CD4-positive, alpha-beta memory T cell (primary cell): ENCODE measurements at regions of chr17 and their contacts with region 1.

Region 1: GRCh38 chr17:48678141-48678971 is 44.0 kb downstream of the PRAC1 start:
- DNase-seq: peak; percentile 56 to 68 (median 59)
- H3K4me3 ChIP-seq: no peak overlapping the region
- H3K4me3 Mint-ChIP-seq: peak overlapping the region in 4 of 8 donors; percentile 44 to 62 (median 52)
- H3K27ac ChIP-seq: no peak overlapping the region
- H3K27ac Mint-ChIP-seq: peak overlapping the region in 2 of 7 donors; percentile 47 to 68
- H3K4me1 ChIP-seq: peaks cover 8% of the 10 kb centered on the region
- H3K4me1 Mint-ChIP-seq: peaks cover 0 to 2% (median under 1%) of the 10 kb centered on the region in 4 donors
- H3K27me3 ChIP-seq: peaks cover 7% of the 10 kb centered on the region
- H3K27me3 Mint-ChIP-seq: peaks cover 28 to 40% of the 10 kb centered on the region in 2 donors

Region 2: GRCh38 chr17:48593840-48594537 is 84.4 kb before region 1 on chr17:
- CTCF ChIA-PET with region 1: no interaction called
- POLR2A ChIA-PET with region 1: no interaction called
- intact Hi-C with region 1: no loop called
- DNase-seq: peak; percentile 71 to 82 (median 77)
- H3K4me3 ChIP-seq: peak overlapping the region in 1 of 2 donors; percentile 30
- H3K4me3 Mint-ChIP-seq: peak overlapping the region; percentile 80 to 92 (median 82)
- H3K27ac ChIP-seq: no peak overlapping the region
- H3K27ac Mint-ChIP-seq: peak overlapping the region in 1 of 7 donors; percentile 74
- H3K4me1 ChIP-seq: peaks cover 46% of the 10 kb centered on the region
- H3K4me1 Mint-ChIP-seq: peaks cover 23 to 55% (median 43%) of the 10 kb centered on the region in 4 donors
- H3K27me3 ChIP-seq: peaks cover 47% of the 10 kb centered on the region
- H3K27me3 Mint-ChIP-seq: peaks cover 44 to 72% of the 10 kb centered on the region in 2 donors

Region 3: GRCh38 chr17:48630009-48630924 is 48.1 kb before region 1 on chr17:
- CTCF ChIA-PET with region 1: no interaction called
- POLR2A ChIA-PET with region 1: no interaction called
- intact Hi-C with region 1: no loop called
- DNase-seq: no peak
- H3K4me3 ChIP-seq: no peak overlapping the region
- H3K4me3 Mint-ChIP-seq: no peak overlapping the region
- H3K27ac ChIP-seq: no peak overlapping the region
- H3K27ac Mint-ChIP-seq: no peak overlapping the region
- H3K4me1 ChIP-seq: peaks cover 26% of the 10 kb centered on the region
- H3K4me1 Mint-ChIP-seq: peaks cover 8 to 36% (median 12%) of the 10 kb centered on the region in 4 donors
- H3K27me3 ChIP-seq: peaks cover 58% of the 10 kb centered on the region
- H3K27me3 Mint-ChIP-seq: peaks cover 63 to 72% of the 10 kb centered on the region in 2 donors

Region 4: GRCh38 chr17:48690655-48691054 is 12.3 kb after region 1 on chr17:
- CTCF ChIA-PET with region 1: interaction called, 37 read pairs
- POLR2A ChIA-PET with region 1: no interaction called
- intact Hi-C with region 1: no loop called
- DNase-seq: no peak
- H3K4me3 ChIP-seq: no peak overlapping the region
- H3K4me3 Mint-ChIP-seq: no peak overlapping the region
- H3K27ac ChIP-seq: no peak overlapping the region
- H3K27ac Mint-ChIP-seq: no peak overlapping the region
- H3K4me1 ChIP-seq: no peaks in the 10 kb centered on the region
- H3K4me1 Mint-ChIP-seq: no peaks in the 10 kb centered on the region
- H3K27me3 ChIP-seq: peaks cover 7% of the 10 kb centered on the region
- H3K27me3 Mint-ChIP-seq: peaks cover 17% of the 10 kb centered on the region in 2 donors

Region 5: DNA sequence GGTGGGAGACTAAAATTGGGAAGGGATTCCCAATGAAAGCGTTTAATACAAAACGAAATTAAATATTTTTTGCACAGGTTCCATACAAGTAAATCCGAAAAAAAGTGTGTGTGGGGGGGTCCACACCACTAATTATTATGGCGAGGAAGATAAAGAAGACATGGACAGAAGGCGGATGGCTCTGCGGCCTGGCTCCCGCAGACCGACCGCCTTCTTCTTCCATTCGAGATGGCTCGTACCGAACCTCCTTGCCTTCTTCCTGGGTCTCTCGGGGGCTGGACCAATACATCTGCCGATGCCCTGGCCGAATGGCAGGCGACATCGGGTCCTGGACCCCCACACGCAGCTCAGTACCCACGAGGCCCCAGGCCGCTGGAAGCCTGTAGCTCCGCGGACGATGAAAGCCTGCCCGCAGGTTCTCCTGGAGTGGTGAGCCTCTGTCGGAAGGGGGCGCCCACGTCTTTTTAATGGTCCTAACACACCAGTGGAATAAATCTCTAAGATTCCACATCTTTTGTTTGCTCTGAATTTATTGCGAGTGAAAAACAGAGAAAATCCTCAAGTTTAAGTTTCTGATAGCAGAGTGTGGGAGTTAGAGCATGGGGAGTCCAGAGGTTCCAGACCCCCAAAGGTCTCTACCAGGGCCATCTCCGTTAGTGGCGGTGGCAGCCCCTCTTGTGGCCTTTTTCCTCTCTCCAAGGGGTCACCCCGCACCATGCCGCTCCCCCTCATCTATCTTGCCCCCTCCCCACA is 46.1 kb after region 1 on chr17:
- CTCF ChIA-PET with region 1: interaction called, 15 read pairs
- POLR2A ChIA-PET with region 1: no interaction called
- intact Hi-C with region 1: no loop called
- DNase-seq: peak; percentile 64 to 79 (median 66)
- H3K4me3 ChIP-seq: no peak overlapping the region
- H3K4me3 Mint-ChIP-seq: peak overlapping the region; percentile 59 to 84 (median 78)
- H3K27ac ChIP-seq: no peak overlapping the region
- H3K27ac Mint-ChIP-seq: peak overlapping the region in 3 of 7 donors; percentile 82 to 86 (median 85)
- H3K4me1 ChIP-seq: peaks cover 40% of the 10 kb centered on the region
- H3K4me1 Mint-ChIP-seq: peaks cover 22 to 81% (median 33%) of the 10 kb centered on the region in 4 donors
- H3K27me3 ChIP-seq: peaks cover 96% of the 10 kb centered on the region
- H3K27me3 Mint-ChIP-seq: peaks cover 79 to 83% of the 10 kb centered on the region in 2 donors

Region 6: DNA sequence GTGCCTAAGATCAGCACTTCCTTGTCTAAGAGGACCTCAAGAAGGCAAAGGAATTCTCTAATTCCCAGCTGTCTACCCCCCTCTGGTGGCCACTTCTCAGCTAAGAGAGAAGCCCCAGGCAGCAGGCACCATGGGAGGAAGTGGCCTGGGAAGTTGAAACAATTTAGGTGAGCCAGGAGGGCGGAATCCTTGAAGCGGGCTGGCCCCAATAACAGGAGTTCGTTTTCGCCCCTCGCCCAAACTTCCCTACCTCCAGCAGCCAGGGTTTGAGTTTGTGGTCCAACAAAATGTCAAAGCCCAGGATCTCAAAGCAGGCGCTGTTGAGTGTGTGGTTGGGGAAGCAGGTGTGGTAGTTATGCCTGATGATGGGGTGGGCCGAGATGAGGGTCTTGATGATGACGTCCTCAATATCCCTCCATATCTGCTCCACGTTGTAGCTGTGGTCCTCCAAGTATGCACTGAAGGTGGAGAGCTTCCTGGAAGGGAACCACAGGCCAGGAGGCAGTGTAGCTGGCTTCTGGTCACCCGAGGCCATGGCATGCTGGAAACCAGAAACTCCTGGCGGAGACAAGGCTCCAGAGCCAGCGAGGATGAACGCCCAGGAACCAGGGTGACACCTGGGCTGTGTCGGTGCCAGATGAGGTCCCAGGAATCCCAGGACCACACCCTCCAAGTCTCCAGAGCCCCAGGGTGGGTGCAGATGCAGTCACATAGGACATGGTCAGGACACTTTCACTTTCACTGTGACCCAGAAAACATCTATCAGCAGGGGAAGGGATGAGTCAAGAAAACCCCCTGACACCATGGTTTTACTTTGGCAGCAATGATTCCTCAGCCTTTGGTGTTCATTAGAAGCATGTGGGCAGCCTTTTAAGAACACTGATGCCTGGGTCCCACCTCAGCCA is 113.0 kb after region 1 on chr17:
- CTCF ChIA-PET with region 1: interaction called, 20 read pairs
- POLR2A ChIA-PET with region 1: no interaction called
- intact Hi-C with region 1: loop called (anchors 5 kb)
- DNase-seq: peak in 1 of 5 donors; percentile 14
- H3K4me3 ChIP-seq: no peak overlapping the region
- H3K4me3 Mint-ChIP-seq: no peak overlapping the region
- H3K27ac ChIP-seq: no peak overlapping the region
- H3K27ac Mint-ChIP-seq: no peak overlapping the region
- H3K4me1 ChIP-seq: no peaks in the 10 kb centered on the region
- H3K4me1 Mint-ChIP-seq: no peaks in the 10 kb centered on the region
- H3K27me3 ChIP-seq: no peaks in the 10 kb centered on the region
- H3K27me3 Mint-ChIP-seq: peaks cover 23 to 49% of the 10 kb centered on the region in 2 donors

Region 7: DNA sequence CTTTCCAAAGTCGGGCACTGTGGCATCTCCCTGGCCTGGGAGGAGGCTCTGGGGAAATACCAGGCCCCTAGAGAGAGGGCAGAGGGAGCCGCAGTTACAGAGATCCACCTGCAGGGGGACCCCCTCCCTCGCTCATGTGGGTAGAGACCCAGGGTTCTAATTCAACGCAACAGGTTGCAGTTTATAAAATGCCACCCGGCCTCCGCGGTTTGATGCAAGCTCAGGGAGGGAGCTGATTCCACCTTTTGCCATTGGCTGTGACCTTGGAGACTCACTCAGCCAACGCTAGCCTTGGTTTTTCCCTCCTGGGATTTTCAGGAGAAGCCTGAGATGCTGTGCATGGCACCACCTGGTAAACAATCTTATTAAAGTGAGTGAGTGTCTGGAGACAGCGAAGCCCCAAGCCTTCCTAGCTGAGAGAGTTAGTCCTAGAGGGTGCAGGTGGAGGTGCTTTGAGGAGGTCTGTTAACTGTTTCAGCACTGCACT is 126.6 kb after region 1 on chr17:
- CTCF ChIA-PET with region 1: interaction called, 10 read pairs
- POLR2A ChIA-PET with region 1: no interaction called
- intact Hi-C with region 1: no loop called
- DNase-seq: peak; percentile 49 to 64 (median 55)
- H3K4me3 ChIP-seq: no peak overlapping the region
- H3K4me3 Mint-ChIP-seq: no peak overlapping the region
- H3K27ac ChIP-seq: no peak overlapping the region
- H3K27ac Mint-ChIP-seq: no peak overlapping the region
- H3K4me1 ChIP-seq: no peaks in the 10 kb centered on the region
- H3K4me1 Mint-ChIP-seq: no peaks in the 10 kb centered on the region
- H3K27me3 ChIP-seq: no peaks in the 10 kb centered on the region
- H3K27me3 Mint-ChIP-seq: peaks cover 0 to 10% of the 10 kb centered on the region in 2 donors

Region 8: DNA sequence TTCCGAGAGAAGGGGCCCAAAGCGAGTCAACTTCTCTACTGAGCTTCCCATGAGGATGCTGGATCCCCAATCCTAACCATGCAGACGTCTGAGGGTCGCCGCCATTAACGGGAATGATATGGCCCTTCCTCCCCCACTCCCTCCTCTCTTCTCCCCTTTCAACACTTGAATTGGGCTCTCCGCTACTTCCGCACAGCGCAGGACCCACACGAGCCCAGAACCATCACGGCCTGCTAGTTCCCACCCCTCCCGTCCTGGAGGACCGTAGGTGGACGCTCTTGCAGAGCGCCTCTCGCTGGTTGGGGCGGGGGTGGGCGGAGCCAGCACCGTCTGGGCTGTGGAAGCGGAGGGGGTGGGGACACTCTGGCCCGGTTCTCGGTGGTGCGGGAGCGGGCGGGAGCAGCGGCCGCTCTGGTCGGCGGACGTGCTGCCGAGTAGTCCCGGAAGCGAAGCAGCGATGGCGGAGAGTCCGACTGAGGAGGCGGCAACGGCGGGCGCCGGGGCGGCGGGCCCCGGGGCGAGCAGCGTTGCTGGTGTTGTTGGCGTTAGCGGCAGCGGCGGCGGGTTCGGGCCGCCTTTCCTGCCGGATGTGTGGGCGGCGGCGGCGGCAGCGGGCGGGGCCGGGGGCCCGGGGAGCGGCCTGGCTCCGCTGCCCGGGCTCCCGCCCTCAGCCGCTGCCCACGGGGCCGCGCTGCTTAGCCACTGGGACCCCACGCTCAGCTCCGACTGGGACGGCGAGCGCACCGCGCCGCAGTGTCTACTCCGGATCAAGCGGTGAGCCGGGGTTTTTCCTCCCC is 229.9 kb after region 1 on chr17 and contains the start of gene UBE2Z:
- CTCF ChIA-PET with region 1: no interaction called
- POLR2A ChIA-PET with region 1: no interaction called
- intact Hi-C with region 1: no loop called
- DNase-seq: peak; percentile 83 to 89 (median 87)
- H3K4me3 ChIP-seq: peak within 1 kb of the TSS; percentile 63 to 65
- H3K4me3 Mint-ChIP-seq: peak within 1 kb of the TSS; percentile 91 to 98 (median 94)
- H3K27ac ChIP-seq: peak within 1 kb of the TSS; percentile 82
- H3K27ac Mint-ChIP-seq: peak within 1 kb of the TSS; percentile 96 to 99 (median 98)
- H3K4me1 ChIP-seq: peaks cover 50% of the 10 kb centered on the region
- H3K4me1 Mint-ChIP-seq: peaks cover 39 to 54% (median 46%) of the 10 kb centered on the region in 4 donors
- H3K27me3 ChIP-seq: no peaks in the 10 kb centered on the region
- H3K27me3 Mint-ChIP-seq: no peaks in the 10 kb centered on the region
- total RNA-seq, gene UBE2Z: 98.4 to 105 TPM

Region 9: GRCh38 chr17:49031965-49032928 is 353.9 kb after region 1 on chr17:
- CTCF ChIA-PET with region 1: interaction called, 4 read pairs
- POLR2A ChIA-PET with region 1: no interaction called
- intact Hi-C with region 1: loop called (anchors 2 kb)
- DNase-seq: peak; percentile 41 to 56 (median 54)
- H3K4me3 ChIP-seq: no peak overlapping the region
- H3K4me3 Mint-ChIP-seq: no peak overlapping the region
- H3K27ac ChIP-seq: no peak overlapping the region
- H3K27ac Mint-ChIP-seq: no peak overlapping the region
- H3K4me1 ChIP-seq: peaks cover 3% of the 10 kb centered on the region
- H3K4me1 Mint-ChIP-seq: peaks cover 0 to 7% (median 2%) of the 10 kb centered on the region in 4 donors
- H3K27me3 ChIP-seq: no peaks in the 10 kb centered on the region
- H3K27me3 Mint-ChIP-seq: peaks cover 11 to 12% of the 10 kb centered on the region in 2 donors

Region 10: DNA sequence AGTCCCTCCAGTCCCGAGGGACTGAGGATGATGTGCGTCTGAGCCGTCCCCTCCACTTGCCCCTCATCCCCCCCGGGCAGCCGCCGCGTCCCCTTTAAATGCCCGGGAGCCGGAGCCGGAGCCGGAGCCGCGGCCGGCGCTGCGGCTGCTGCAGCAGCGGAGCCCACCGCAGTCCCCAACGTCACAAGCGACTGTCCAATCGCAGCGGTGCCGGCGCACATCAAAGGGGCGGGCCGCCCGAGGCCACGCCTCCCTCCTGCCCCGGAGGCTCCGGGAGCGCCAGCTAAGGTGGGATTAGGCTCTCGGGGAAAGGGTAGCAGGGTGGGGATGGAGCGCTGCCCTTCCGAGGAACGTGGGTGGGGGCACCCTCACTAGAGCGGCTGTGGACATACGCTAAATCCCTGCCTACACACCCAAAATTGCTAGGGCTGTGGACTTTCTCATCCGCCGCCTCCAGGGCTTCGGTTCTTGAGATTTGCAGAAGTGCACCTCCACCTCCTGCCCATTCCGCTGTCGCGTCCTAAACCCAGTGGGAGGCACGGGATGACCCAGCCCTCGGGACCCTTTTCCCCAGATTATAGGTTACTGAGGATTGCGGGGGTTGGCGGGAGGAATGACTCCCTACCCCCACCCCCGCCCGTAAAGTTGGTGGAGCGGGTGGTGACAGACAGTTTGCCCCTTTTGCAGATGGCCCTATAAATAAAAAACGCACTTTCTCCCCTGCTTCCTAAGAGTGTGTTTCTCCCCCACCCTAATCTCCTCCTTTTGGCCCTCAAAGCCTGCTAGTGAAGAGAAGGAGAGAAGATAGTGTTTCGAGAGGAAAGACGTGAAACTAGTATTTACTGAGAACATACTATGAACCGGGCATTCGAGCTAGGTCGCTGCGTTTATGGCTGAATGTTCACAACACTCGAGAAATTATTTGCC is 552.5 kb after region 1 on chr17 and contains the start of gene PHOSPHO1:
- CTCF ChIA-PET with region 1: no interaction called
- POLR2A ChIA-PET with region 1: no interaction called
- intact Hi-C with region 1: loop called (anchors 2 kb)
- DNase-seq: peak; percentile 83 to 87 (median 84)
- H3K4me3 ChIP-seq: peak within 1 kb of the TSS; percentile 62 to 88
- H3K4me3 Mint-ChIP-seq: peak within 1 kb of the TSS; percentile 81 to 95 (median 86)
- H3K27ac ChIP-seq: no peak within 1 kb of the TSS
- H3K27ac Mint-ChIP-seq: peak within 1 kb of the TSS; percentile 35 to 96 (median 78)
- H3K4me1 ChIP-seq: peaks cover 17% of the 10 kb centered on the region
- H3K4me1 Mint-ChIP-seq: peaks cover 8 to 24% (median 13%) of the 10 kb centered on the region in 4 donors
- H3K27me3 ChIP-seq: peaks cover 16% of the 10 kb centered on the region
- H3K27me3 Mint-ChIP-seq: peaks cover 7 to 12% of the 10 kb centered on the region in 2 donors
- total RNA-seq, gene PHOSPHO1: not detected